Colonic mucosa (tissue), 4 donors: ENCODE measurements at regions of chr4 and their contacts with region 1.

Region 1: DNA sequence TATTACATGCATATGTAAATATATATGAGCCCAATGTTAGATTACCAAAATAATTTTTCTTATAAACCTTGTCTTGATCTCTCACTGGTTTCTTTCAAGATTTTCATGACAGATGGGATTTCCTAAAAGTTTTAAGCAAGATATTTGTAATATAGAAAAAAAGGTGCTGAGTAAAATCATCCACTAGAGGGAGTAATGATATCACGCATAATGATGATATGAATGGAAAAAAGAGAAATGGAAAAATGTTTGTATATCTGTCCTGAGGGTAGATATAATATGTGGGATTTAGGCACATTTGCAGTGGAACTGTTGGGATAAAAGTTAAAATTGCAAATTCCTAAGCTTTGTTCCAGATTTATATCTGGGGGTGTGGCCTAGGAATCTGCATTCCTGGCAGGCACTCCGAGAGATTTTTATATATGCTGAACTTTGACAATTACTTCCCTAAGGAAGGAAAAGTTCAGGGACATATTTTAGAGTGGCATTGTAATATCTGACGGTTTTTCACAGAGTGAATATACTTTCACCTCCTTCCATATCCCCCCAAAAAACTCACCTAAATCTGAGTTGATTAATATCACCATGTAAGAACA is 60.5 kb downstream of the TMA16 start:
- DNase-seq: no peak
- H3K4me3 ChIP-seq: no peak overlapping the region
- H3K27ac ChIP-seq: no peak overlapping the region
- H3K4me1 ChIP-seq: no peaks in the 10 kb centered on the region
- H3K27me3 ChIP-seq: no peaks in the 10 kb centered on the region
- CTCF ChIP-seq: peak; percentile 65

Region 2: DNA sequence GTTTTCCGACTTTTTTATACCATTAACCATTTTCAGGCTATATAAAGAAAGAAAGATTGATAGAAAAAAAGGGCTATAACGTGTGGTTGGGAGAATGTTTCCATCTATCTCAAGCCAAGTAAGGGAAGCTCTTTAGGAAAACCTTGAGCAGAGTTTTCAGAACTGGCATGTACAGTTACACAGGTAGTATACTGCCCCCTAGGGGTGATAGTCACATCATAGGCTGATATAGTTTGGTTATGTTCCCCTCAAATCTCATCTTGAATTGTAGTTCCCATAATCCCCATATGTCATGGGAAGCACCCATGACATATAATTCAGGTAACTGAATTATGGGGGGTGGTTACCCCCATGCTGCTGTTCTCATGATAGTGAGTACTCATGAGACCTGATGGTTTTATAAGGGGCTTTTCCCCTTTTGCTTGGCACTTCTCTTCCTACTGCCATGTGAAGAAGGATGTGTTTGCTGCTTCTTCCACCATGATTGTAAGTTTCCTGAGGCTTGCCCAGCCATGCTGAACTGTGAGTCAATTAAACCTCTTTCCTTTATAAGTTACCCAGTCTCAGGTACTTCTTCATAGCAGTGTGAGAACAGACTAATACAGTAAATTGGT is 126.3 kb after region 1 on chr4:
- intact Hi-C with region 1: loop called (anchors 5 kb)
- DNase-seq: peak; percentile 42
- H3K4me3 ChIP-seq: no peak overlapping the region
- H3K27ac ChIP-seq: no peak overlapping the region
- H3K4me1 ChIP-seq: no peaks in the 10 kb centered on the region
- H3K27me3 ChIP-seq: no peaks in the 10 kb centered on the region
- CTCF ChIP-seq: peak; percentile 54

Region 3: DNA sequence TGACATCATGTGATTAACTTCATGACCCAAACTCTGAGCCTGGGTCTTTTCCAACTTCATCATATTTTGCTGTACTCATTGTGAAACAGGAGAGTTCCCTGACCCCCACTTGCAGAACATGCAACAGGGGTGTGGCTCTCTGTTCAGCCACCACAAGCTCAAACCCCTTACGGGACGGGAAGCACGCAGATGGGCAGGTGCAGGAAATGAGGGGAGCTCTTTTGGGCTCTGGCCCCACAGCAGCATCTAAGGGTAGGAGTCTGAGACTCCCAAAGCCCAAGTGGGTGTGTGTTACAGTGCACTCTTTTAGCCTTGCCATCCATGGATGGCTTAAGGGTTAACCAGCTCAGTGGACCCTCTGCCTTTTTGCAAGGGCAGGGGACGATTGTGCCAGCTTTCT is 599.4 kb after region 1 on chr4:
- intact Hi-C with region 1: no loop called
- DNase-seq: no peak
- H3K4me3 ChIP-seq: no peak overlapping the region
- H3K27ac ChIP-seq: no peak overlapping the region
- H3K4me1 ChIP-seq: no peaks in the 10 kb centered on the region
- H3K27me3 ChIP-seq: no peaks in the 10 kb centered on the region
- CTCF ChIP-seq: no peak

Region 4: DNA sequence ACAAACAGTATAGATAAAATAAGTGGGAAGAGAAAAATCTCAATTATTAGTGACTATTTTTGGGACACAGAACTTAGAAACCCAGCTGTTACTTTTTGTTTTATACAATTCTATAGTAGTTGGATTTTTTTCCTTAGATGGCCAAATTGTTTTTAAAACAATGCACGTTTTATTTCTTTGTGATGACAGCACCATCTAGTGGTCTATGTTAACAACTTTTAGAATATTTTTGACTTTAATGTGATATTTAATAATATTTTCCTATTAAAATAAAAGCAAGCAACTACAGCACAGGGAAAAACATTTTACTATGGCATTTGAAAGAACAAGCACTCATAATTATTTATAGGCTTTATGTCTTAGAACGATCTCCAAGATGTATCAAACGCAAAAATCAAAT is 1193.4 kb after region 1 on chr4:
- intact Hi-C with region 1: loop called (anchors 5 kb)
- DNase-seq: no peak
- H3K4me3 ChIP-seq: no peak overlapping the region
- H3K27ac ChIP-seq: no peak overlapping the region
- H3K4me1 ChIP-seq: no peaks in the 10 kb centered on the region
- H3K27me3 ChIP-seq: no peaks in the 10 kb centered on the region
- CTCF ChIP-seq: peak; percentile 17